ENCODE measurements at regions of chr7 and their contacts with region 1.

Region 1: GRCh38 chr7:87312215-87312865 is 33.1 kb upstream of the CROT start:
- DNase-seq: peak in 9 of 10 donors; percentile 39 to 94 (median 72)

Region 2: GRCh38 chr7:87416682-87417587 is 104.6 kb after region 1 on chr7:
- intact Hi-C with region 1: loop called (anchors 1 kb)
- DNase-seq: peak in 5 of 10 donors; percentile 15 to 65 (median 51)

Region 3: GRCh38 chr7:87574630-87575029 is 262.3 kb after region 1 on chr7:
- intact Hi-C with region 1: no loop called
- DNase-seq: no peak

Region 4: DNA sequence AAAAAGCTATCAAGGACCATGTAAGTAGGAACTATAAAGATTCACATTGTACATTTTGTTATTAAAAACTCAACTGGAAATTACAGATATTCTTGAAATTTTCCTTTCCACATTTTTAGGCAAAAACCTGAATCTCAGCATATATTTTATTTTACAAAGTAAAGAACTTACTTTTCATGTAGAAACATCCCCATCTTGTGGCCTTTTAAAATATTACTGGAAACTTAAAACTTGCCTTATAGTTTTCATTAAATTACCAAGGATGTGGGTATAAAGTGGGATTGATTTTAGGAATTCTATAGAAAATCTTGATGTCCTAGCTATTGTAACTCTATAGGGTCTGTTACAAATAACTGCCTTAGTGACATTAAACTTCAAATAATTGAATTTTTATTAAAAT is 574.5 kb after region 1 on chr7:
- intact Hi-C with region 1: loop called (anchors 10 kb)
- DNase-seq: no peak

Measured in posterior cingulate gyrus (tissue), 11 donors.